Heart left ventricle (tissue), 16 donors: ENCODE measurements at regions of chr17 and their contacts with region 1.

Region 1: DNA sequence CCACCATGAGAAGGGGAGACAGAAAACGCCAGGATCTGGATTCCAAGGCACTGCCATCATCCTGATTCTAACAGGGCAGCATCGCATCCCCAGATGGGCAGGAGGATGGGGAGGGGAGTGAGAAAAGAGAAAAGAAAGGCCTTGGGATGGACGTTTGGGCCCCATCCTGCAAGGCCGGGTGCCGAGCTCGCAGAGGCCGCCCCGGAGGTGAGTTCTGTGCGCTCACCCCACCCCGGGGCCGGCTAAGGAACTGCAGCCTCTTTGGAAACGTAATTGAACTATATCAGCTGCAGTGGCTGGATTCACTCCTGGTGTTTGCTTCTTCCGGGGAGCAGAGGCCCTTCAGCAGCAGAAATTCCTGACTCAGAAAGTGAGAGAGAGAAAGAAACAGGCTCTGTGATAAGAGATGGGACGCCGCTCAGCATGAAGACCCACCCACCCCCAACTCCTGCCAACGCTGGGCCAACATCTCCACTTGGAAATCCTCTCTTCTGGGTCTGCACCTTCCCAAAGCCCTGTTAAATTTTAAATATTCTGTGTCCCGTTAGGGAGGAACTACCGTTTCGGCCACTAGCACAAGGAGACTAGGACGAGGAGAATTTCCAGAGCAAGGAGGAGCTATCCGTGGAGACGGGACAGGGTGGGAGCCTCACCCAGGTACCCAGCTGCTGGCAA is 8.5 kb upstream of the SSTR2 start:
- DNase-seq: peak; percentile 63 to 83 (median 67)
- ATAC-seq: peak; percentile 60 to 98 (median 94)
- H3K4me3 ChIP-seq: no peak overlapping the region
- H3K27ac ChIP-seq: no peak overlapping the region
- H3K4me1 ChIP-seq: peaks cover 0 to 13% (median 0%) of the 10 kb centered on the region in 12 donors
- H3K27me3 ChIP-seq: peaks cover 0 to 29% (median 6%) of the 10 kb centered on the region in 9 donors
- CTCF ChIP-seq: peak; percentile 64 to 87 (median 77)
- POLR2A ChIP-seq: no peak

Region 2: GRCh38 chr17:72556944-72557826 is 599.1 kb before region 1 on chr17:
- intact Hi-C with region 1: loop called in 7 of 10 experiments (anchors 5 to 10 kb)
- DNase-seq: peak in 4 of 5 donors; percentile 27 to 57 (median 40)
- ATAC-seq: peak in 3 of 4 donors; percentile 46 to 74 (median 63)
- H3K4me3 ChIP-seq: no peak overlapping the region
- H3K27ac ChIP-seq: no peak overlapping the region
- H3K4me1 ChIP-seq: no peaks in the 10 kb centered on the region
- H3K27me3 ChIP-seq: peaks cover 0 to 16% (median 0%) of the 10 kb centered on the region in 9 donors
- CTCF ChIP-seq: peak; percentile 49 to 85 (median 74)
- POLR2A ChIP-seq: no peak

Region 3: DNA sequence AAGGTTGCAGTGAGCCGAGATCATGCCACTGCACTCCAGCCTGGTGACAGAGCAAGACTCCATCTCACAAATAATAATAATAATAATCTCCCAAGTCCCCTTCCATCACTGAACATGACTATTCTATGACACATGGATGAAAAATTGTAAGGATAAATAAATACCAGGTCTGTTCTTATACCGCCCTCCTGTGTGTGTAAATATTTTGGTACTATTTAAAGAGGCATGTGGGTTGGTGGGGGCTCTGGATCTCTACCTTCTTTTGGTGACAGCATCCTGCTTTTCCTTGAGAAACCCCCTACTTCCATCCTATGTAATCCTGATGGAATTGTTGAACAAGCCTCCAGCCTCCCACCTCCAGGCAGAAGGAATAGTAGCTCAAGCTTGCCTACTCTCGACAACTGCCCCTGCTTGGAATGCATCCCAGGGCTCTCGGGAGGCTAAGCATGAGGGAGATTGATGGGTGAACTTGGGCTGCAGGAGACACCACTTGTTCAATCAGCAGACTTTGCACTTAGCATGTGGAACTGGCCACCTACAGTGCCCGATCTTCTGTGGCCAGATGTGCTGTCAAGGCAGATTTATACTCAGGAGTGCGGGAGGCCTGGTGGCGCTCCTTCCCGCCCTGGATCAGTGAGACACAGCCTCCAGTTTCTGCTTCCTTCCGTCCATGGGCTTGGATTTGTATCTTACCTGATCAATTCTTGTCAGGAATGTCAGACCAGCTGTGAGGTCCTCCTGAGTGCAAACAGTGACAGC is 351.2 kb before region 1 on chr17:
- intact Hi-C with region 1: no loop called
- DNase-seq: no peak
- ATAC-seq: no peak
- H3K4me3 ChIP-seq: no peak overlapping the region
- H3K27ac ChIP-seq: no peak overlapping the region
- H3K4me1 ChIP-seq: no peaks in the 10 kb centered on the region
- H3K27me3 ChIP-seq: no peaks in the 10 kb centered on the region
- CTCF ChIP-seq: no peak
- POLR2A ChIP-seq: no peak

Region 4: GRCh38 chr17:72884066-72884465 is 272.2 kb before region 1 on chr17:
- intact Hi-C with region 1: loop called in 1 of 10 experiments (anchors 10 kb)
- DNase-seq: no peak
- ATAC-seq: no peak
- H3K4me3 ChIP-seq: no peak overlapping the region
- H3K27ac ChIP-seq: no peak overlapping the region
- H3K4me1 ChIP-seq: no peaks in the 10 kb centered on the region
- H3K27me3 ChIP-seq: no peaks in the 10 kb centered on the region
- CTCF ChIP-seq: no peak
- POLR2A ChIP-seq: no peak

Region 5: GRCh38 chr17:72985881-72986720 is 170.2 kb before region 1 on chr17:
- intact Hi-C with region 1: loop called (anchors 2 to 10 kb)
- DNase-seq: peak in 4 of 5 donors; percentile 48 to 63 (median 60)
- ATAC-seq: peak; percentile 42 to 85 (median 78)
- H3K4me3 ChIP-seq: no peak overlapping the region
- H3K27ac ChIP-seq: no peak overlapping the region
- H3K4me1 ChIP-seq: peaks cover 0 to 6% (median 0%) of the 10 kb centered on the region in 12 donors
- H3K27me3 ChIP-seq: no peaks in the 10 kb centered on the region
- CTCF ChIP-seq: peak; percentile 68 to 87 (median 81)
- POLR2A ChIP-seq: no peak

Region 6: DNA sequence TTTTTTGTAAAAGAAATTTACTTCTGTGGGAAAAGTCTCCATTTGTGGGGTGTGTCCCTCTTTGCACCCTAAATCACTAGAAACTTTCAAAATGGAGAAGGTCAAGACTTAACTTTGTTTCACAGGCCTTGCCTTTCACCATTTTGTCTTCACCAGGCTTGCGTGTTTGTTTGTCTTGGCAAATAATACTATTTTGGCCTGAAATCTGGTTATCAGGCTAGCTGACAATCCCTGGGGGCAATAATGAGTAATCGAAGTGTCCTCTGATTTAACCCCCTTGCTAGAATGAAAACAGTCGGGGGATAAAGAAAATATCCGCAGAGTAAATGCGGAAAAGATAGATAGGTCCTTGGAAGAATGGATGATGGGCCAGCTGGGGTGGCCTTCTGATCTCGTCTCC is 98.3 kb before region 1 on chr17:
- intact Hi-C with region 1: no loop called
- DNase-seq: no peak
- ATAC-seq: peak in 2 of 4 donors; percentile 36 to 69
- H3K4me3 ChIP-seq: no peak overlapping the region
- H3K27ac ChIP-seq: peak overlapping the region in 8 of 12 donors; percentile 24 to 49 (median 36)
- H3K4me1 ChIP-seq: peaks cover 0 to 13% (median 0%) of the 10 kb centered on the region in 12 donors
- H3K27me3 ChIP-seq: no peaks in the 10 kb centered on the region
- CTCF ChIP-seq: no peak
- POLR2A ChIP-seq: no peak

Region 7: GRCh38 chr17:73281928-73282327 is 125.6 kb after region 1 on chr17:
- intact Hi-C with region 1: no loop called
- DNase-seq: no peak
- ATAC-seq: no peak
- H3K4me3 ChIP-seq: no peak overlapping the region
- H3K27ac ChIP-seq: peak overlapping the region in 1 of 12 donors; percentile 93
- H3K4me1 ChIP-seq: peaks cover 4 to 71% (median 49%) of the 10 kb centered on the region in 12 donors
- H3K27me3 ChIP-seq: no peaks in the 10 kb centered on the region
- CTCF ChIP-seq: no peak
- POLR2A ChIP-seq: no peak